ENCODE measurements at regions of chr5 and their contacts with region 1.

Region 1: GRCh38 chr5:90438100-90438499 is 28.5 kb upstream of the CETN3 start:
- DNase-seq: no peak
- ATAC-seq: no peak
- H3K4me3 Mint-ChIP-seq: no peak overlapping the region
- H3K27ac Mint-ChIP-seq: no peak overlapping the region
- H3K4me1 Mint-ChIP-seq: peaks cover 7% of the 10 kb centered on the region
- H3K27me3 Mint-ChIP-seq: peaks cover 10% of the 10 kb centered on the region

Region 2: GRCh38 chr5:90338712-90339372 is 99.3 kb before region 1 on chr5:
- CTCF ChIA-PET with region 1: no interaction called
- POLR2A ChIA-PET with region 1: no interaction called
- DNase-seq: no peak
- ATAC-seq: no peak
- H3K4me3 Mint-ChIP-seq: no peak overlapping the region
- H3K27ac Mint-ChIP-seq: no peak overlapping the region
- H3K4me1 Mint-ChIP-seq: no peaks in the 10 kb centered on the region
- H3K27me3 Mint-ChIP-seq: peaks cover 2% of the 10 kb centered on the region

Region 3: GRCh38 chr5:90488791-90489190 is 50.7 kb after region 1 on chr5:
- CTCF ChIA-PET with region 1: no interaction called
- POLR2A ChIA-PET with region 1: no interaction called
- DNase-seq: no peak
- ATAC-seq: no peak
- H3K4me3 Mint-ChIP-seq: no peak overlapping the region
- H3K27ac Mint-ChIP-seq: no peak overlapping the region
- H3K4me1 Mint-ChIP-seq: peaks cover 2% of the 10 kb centered on the region
- H3K27me3 Mint-ChIP-seq: no peaks in the 10 kb centered on the region

Region 4: DNA sequence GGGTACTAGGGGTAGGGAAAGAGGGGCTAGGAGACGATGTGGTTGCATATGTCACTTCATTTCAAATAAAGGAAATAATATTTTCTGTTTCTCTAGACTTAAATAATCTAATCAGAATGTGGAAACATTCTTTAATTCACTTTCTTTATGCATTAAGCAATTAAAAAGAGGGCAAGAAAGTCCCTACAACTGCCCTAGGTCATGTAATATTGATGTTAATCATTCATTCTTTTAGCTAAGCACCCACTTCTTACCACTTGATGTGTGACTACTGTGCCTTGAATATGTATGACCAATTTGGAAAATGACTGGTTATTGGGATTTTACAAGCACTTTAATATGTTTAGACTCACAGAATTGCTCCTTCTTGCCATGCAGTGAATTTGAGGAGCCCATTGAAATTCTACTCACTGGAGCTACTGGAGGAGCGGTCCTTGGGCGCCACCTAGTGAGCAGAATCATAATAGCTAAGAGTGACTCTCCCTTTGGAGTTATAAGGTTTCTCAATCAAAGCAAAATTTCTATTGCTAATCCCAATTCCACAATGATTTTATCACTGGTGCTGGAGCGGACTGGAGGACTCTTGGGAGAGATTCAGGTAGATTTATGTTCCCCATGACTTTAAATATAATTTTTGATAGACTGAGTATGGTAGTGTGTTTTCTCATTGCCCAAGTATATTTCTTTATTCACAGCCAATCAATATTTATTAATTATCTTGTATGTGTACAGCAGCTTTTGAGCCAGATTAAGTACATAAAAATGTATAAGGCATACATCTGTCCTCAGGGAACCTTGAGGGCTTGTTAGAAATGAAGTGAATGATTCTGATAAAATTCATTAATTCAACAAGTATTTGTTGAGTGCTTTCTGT is 345.6 kb after region 1 on chr5:
- CTCF ChIA-PET with region 1: interaction called, 21 read pairs
- POLR2A ChIA-PET with region 1: no interaction called
- DNase-seq: peak; percentile 79
- ATAC-seq: peak; percentile 81
- H3K4me3 Mint-ChIP-seq: no peak overlapping the region
- H3K27ac Mint-ChIP-seq: no peak overlapping the region
- H3K4me1 Mint-ChIP-seq: no peaks in the 10 kb centered on the region
- H3K27me3 Mint-ChIP-seq: peaks cover 21% of the 10 kb centered on the region